ENCODE measurements at regions of chr22 and their contacts with region 1.

Region 1: DNA sequence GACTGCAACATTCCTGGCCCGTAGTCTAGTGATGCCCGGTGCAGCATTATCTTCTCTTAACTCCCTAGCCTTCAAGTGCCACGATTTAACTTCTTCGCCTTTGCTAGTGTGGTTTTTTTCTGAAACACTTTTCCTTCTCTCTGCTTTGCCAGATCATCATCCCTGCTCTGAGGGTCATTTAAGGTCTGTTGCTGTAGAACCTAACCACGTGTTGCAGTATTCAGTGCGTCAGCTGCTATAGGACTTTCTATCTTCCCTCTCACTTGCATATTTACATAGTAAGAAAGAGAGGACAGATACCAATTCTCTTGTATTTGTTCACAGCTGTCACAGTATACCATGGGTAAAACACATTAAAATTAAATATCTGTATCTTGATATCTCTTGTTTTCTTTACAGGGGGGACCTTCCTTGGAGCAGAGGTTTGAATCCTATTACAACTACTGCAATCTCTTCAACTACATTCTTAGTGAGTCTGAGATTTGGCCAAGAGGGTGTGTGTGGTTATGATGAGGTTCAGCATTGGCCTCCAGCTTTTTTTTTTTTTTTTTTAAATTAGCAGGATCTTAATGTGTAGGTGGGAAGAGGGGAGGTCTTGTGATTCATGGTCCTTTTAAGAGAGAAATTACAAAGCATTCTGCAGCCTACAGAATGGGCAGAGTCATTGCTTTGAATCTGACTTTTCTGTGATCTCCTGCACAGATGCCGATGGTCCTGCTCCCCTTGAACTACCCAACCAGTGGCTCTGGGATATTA is 13.5 kb downstream of the EIF3L start:
- DNase-seq: no peak
- ATAC-seq: no peak
- H3K4me3 ChIP-seq: no peak overlapping the region
- H3K27ac ChIP-seq: no peak overlapping the region
- H3K4me1 ChIP-seq: peaks cover 0 to 4% of the 10 kb centered on the region in 2 donors
- H3K27me3 ChIP-seq: no peaks in the 10 kb centered on the region
- CTCF ChIP-seq: no peak

Region 2: DNA sequence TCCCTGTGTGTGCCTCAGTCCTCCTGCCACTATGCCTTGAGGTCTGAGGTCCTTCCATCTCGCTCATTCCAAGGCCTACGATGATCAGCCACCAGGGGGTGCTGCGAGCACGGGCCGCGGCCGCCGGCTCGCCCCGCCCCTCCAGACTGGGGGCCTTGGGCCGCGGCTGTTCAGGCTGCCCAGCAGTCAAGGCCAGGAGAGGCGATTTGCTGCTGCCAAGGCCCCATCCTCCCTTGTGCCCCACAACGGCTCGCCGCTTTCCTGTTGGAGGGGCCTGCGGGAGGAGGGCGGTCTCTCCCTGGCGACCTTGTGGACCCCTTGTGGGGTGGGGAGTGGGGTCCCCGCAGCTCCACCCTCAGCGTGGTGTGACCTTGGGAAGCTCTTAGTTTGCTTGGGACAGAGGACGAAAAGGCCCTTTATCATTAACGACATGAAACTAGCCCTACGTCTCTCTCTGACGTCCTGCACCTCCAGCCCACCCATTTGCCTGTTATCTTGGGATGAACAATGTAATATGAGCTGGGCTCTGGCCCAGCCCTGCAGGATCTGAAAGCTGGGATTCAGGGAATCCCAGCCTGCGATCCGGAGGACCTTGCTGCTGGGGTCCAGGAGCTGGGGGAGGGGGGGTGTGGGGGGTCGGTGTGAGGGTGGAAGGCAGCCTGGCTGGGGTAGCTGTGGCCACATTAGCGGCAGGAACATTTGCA is 44.9 kb before region 1 on chr22:
- intact Hi-C with region 1: loop called (anchors 2 to 10 kb)
- DNase-seq: peak; percentile 68 to 95 (median 82)
- ATAC-seq: peak; percentile 97
- H3K4me3 ChIP-seq: peak overlapping the region; percentile 9 to 34
- H3K27ac ChIP-seq: peak overlapping the region in 1 of 2 donors; percentile 57
- H3K4me1 ChIP-seq: peaks cover 15 to 19% of the 10 kb centered on the region in 2 donors
- H3K27me3 ChIP-seq: peaks cover 6 to 52% of the 10 kb centered on the region in 2 donors
- CTCF ChIP-seq: peak; percentile 94 to 98

Region 3: GRCh38 chr22:37996515-37997246 is 133.9 kb after region 1 on chr22:
- intact Hi-C with region 1: no loop called
- DNase-seq: no peak
- ATAC-seq: no peak
- H3K4me3 ChIP-seq: no peak overlapping the region
- H3K27ac ChIP-seq: no peak overlapping the region
- H3K4me1 ChIP-seq: no peaks in the 10 kb centered on the region
- H3K27me3 ChIP-seq: no peaks in the 10 kb centered on the region
- CTCF ChIP-seq: no peak